WTC11 (cell line): ENCODE measurements at regions of chr5 and their contacts with region 1.

Region 1: DNA sequence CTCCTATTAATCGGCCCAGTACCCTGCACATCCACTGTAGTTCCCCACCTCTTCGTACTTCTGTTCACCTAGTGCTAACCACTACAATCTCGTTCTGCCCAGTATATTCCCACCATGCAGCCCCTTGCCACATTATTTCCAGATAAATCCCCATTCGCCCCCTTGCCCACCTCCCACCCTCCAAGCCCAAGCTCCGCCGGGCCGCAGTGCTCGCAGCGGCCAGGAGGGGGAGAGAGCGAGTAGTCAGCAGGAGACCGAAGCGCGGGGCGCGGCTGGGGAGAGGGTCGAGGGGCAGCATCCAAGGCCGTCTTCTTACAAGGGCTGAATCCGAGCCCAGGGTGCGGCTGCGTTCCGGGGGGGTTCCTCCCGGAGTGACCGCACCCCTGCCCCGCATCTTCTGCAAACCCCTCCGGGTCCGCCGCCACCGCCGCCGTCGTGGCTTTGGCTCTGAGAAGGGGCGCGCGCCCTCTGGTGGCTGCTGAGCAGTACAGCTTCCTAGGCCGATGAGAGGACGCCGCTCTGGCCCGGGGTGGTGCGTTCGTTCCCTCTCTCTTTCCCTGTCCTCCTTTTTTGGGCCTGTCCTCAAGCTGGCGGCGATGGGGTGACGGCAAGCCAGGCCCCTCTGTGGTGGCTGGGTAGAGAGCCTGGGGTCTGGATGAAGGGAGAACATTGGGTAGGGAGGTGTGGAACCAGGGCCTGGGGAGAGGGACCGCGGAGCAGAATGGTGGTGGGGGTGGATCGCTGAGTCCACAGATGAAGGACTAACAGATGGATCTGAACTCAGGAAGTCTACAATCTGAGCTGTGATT is 30.0 kb upstream of the PSD2 start:
- DNase-seq: peak; percentile 84
- ATAC-seq: peak; percentile 84
- H3K4me3 Mint-ChIP-seq: peak overlapping the region; percentile 61
- H3K27ac Mint-ChIP-seq: no peak overlapping the region
- H3K4me1 Mint-ChIP-seq: peaks cover 42% of the 10 kb centered on the region
- H3K27me3 Mint-ChIP-seq: peaks cover 52% of the 10 kb centered on the region
- CTCF ChIP-seq: peak; percentile 97

Region 2: DNA sequence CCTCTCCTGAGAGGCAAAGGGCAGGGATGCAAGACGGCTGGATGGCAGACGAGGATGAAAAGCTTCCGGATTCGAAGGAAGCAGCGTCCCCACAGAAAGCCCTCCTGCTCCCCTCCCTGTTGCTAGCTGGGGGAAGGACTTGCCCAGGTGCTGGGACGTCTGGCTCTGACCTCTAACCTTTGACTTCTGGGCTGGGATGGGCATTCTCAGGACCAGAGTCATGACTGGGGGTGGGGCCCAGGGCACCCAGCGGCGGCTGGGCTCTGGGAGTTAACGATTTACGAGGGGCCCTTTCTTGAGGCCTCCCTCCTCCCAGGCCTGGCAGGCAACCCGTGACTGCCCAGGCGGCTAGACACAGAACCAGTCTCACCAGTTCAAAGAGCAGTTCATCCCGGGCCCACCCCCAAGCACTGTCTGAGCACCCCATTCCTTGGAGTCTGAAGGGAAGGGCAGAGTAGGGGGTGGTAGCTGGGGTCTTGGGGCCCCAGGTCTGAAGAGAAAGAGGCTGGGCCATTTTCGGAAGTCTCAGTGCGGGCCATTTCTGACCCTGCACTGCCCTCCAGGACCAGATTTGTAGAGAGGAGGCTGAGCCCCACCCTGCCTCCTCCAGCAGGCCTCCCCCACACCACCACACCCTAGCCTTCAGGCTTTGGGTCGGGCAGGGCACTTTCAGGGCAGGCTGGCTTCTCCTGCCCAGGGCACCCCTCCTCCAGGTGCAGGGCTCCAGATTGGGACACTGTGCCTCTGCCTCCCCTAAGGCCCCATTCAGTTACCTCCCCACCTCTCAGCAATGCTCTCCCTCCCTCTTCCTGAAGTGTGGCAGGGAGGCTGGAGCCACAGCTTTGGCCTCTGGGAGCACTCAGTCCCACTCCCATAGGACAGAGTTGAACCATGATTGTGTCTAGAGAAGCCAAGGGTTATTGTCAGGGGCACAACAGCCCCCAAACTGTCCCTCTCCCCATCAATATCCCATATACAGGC is 122.4 kb before region 1 on chr5:
- CTCF ChIA-PET with region 1: interaction called, 247 read pairs
- POLR2A ChIA-PET with region 1: interaction called, 3 read pairs
- DNase-seq: no peak
- ATAC-seq: no peak
- H3K4me3 Mint-ChIP-seq: no peak overlapping the region
- H3K27ac Mint-ChIP-seq: no peak overlapping the region
- H3K4me1 Mint-ChIP-seq: peaks cover 82% of the 10 kb centered on the region
- H3K27me3 Mint-ChIP-seq: peaks cover 32% of the 10 kb centered on the region
- CTCF ChIP-seq: no peak

Region 3: GRCh38 chr5:139670369-139671095 is 95.1 kb before region 1 on chr5:
- CTCF ChIA-PET with region 1: interaction called, 15 read pairs
- POLR2A ChIA-PET with region 1: no interaction called
- DNase-seq: no peak
- ATAC-seq: 0 out of 2 replicates have a peak, but pooled peaks have one; percentile 6
- H3K4me3 Mint-ChIP-seq: no peak overlapping the region
- H3K27ac Mint-ChIP-seq: peak overlapping the region; percentile 59
- H3K4me1 Mint-ChIP-seq: peaks cover 71% of the 10 kb centered on the region
- H3K27me3 Mint-ChIP-seq: no peaks in the 10 kb centered on the region
- CTCF ChIP-seq: no peak

Region 4: GRCh38 chr5:139690064-139690802 is 75.4 kb before region 1 on chr5:
- CTCF ChIA-PET with region 1: interaction called, 77 read pairs
- POLR2A ChIA-PET with region 1: no interaction called
- DNase-seq: no peak
- ATAC-seq: peak; percentile 11
- H3K4me3 Mint-ChIP-seq: peak overlapping the region; percentile 24; the same call in 1 of the 2 replicates
- H3K27ac Mint-ChIP-seq: peak overlapping the region; percentile 19; the same call in 1 of the 2 replicates
- H3K4me1 Mint-ChIP-seq: peaks cover 63% of the 10 kb centered on the region
- H3K27me3 Mint-ChIP-seq: peaks cover 24% of the 10 kb centered on the region
- CTCF ChIP-seq: no peak

Region 5: GRCh38 chr5:139731281-139731680 is 34.3 kb before region 1 on chr5:
- CTCF ChIA-PET with region 1: interaction called, 14 read pairs
- POLR2A ChIA-PET with region 1: no interaction called
- DNase-seq: no peak
- ATAC-seq: no peak
- H3K4me3 Mint-ChIP-seq: no peak overlapping the region
- H3K27ac Mint-ChIP-seq: no peak overlapping the region
- H3K4me1 Mint-ChIP-seq: peaks cover 5% of the 10 kb centered on the region
- H3K27me3 Mint-ChIP-seq: no peaks in the 10 kb centered on the region
- CTCF ChIP-seq: no peak

Region 6: GRCh38 chr5:139787568-139788293 is 22.1 kb after region 1 on chr5:
- CTCF ChIA-PET with region 1: interaction called, 38 read pairs
- POLR2A ChIA-PET with region 1: no interaction called
- DNase-seq: peak; percentile 94
- ATAC-seq: peak; percentile 81
- H3K4me3 Mint-ChIP-seq: peak overlapping the region; percentile 91
- H3K27ac Mint-ChIP-seq: no peak overlapping the region
- H3K4me1 Mint-ChIP-seq: peaks cover 4% of the 10 kb centered on the region
- H3K27me3 Mint-ChIP-seq: peaks cover 66% of the 10 kb centered on the region
- CTCF ChIP-seq: peak; percentile 98